Endothelial cell of umbilical vein (primary cell): ENCODE measurements at regions of chr5 and their contacts with region 1.

Region 1: DNA sequence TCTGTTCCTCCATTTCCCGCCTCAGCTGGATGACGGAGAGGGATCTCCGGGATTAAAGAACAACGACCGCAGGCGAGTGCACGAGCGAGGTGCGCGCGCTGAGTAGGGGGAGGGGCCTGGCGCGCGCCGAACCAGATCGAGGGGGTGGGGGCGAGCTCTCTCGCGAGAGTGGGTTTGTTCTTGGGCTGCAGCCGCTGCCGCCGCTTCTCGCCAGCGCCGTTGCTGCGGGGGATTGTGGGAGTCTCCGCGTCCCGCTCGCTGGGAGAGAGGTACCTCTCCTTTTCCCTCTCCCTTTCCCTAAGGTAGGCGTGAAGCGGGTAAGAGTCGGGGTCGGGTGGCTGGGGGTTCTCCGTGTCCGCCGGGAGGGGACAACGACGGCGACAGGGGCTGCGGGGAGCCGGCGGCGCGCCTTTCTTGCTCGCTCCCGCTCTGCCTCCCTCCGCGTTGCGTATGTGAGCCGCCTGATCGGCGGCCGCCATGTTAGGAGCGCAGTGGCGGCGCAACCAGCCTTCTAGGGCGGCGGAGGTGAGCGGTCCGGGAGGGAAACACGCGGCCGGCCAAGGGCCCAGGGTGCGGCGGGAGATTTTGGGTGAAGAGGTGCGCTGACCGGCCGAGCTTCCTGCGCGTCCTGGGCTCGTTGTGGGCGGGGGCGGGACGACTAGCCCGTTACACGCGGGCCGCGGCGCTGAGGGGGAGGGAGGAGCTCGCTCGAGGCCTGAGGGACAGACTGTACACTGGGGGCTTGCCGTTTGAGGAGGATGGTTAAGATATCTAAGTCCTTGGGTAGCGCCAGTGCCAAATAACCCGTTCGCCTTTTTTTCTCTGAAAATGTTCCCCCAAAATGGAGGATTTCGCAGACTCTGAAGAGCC is at the start of gene MATR3:
- DNase-seq: peak; percentile 96
- H3K4me3 ChIP-seq: peak within 1 kb of the TSS; percentile 78 to 93 (median 90)
- H3K27ac ChIP-seq: peak within 1 kb of the TSS; percentile 98
- H3K4me1 ChIP-seq: peaks cover 21% of the 10 kb centered on the region
- H3K27me3 ChIP-seq: no peaks in the 10 kb centered on the region
- CTCF ChIP-seq: peak in 1 of 2 donors; percentile 0
- POLR2A ChIP-seq: peak; percentile 95
- total RNA-seq, gene MATR3: 158 and 164 TPM in 2 replicates

Region 2: GRCh38 chr5:138953387-138954256 is 340.1 kb before region 1 on chr5:
- CTCF ChIA-PET with region 1: no interaction called
- POLR2A ChIA-PET with region 1: no interaction called
- dilution Hi-C with region 1: no loop called
- intact Hi-C with region 1: no loop called
- DNase-seq: peak; percentile 66
- H3K4me3 ChIP-seq: no peak overlapping the region
- H3K27ac ChIP-seq: no peak overlapping the region
- H3K4me1 ChIP-seq: peaks cover 6% of the 10 kb centered on the region
- H3K27me3 ChIP-seq: no peaks in the 10 kb centered on the region
- CTCF ChIP-seq: no peak
- POLR2A ChIP-seq: no peak

Region 3: GRCh38 chr5:138975098-138975847 is 318.5 kb before region 1 on chr5:
- CTCF ChIA-PET with region 1: no interaction called
- POLR2A ChIA-PET with region 1: no interaction called
- dilution Hi-C with region 1: no loop called
- intact Hi-C with region 1: no loop called
- DNase-seq: peak; percentile 66
- H3K4me3 ChIP-seq: no peak overlapping the region
- H3K27ac ChIP-seq: peak overlapping the region; percentile 52
- H3K4me1 ChIP-seq: peaks cover 13% of the 10 kb centered on the region
- H3K27me3 ChIP-seq: no peaks in the 10 kb centered on the region
- CTCF ChIP-seq: no peak
- POLR2A ChIP-seq: no peak

Region 4: DNA sequence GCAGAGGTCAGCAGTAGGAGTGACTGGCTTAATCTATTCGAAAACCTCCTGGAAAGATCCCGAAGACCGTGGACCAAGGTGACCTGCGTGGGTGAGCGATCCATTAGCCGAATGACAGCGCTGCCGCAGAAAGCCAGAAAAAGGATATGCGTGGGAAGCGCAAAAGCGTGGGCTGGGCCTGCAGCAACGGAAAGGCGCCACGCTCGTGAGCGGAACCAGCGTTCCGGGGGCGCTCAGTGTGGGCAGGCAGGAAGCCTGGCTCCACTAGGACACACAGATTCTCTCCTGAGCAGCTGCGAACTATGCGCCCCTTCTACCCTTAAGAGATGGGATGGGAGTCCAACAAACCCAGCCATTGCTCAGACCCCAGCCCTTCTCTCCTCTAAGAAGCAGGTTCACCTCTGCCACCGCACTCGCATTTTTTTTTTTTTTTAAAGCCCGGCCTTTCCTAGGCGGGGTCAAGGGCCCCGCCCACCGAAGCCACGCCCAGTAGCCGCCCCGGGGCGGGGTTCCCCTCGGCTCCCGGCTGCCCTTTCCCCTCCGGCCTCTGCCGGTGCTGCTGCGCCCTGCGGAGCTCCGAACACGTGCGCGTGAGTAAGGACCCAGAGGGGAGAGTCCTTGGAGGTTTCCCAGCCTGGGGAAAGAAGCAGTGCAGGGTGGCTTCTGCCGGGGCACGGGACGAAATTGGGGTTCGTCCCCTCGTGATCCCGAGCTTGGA is 20.0 kb before region 1 on chr5:
- CTCF ChIA-PET with region 1: interaction called, 3 read pairs
- POLR2A ChIA-PET with region 1: interaction called, 4 read pairs
- dilution Hi-C with region 1: no loop called
- intact Hi-C with region 1: loop called (anchors 1 kb)
- DNase-seq: peak; percentile 81
- H3K4me3 ChIP-seq: peak overlapping the region; percentile 53 to 87 (median 55)
- H3K27ac ChIP-seq: peak overlapping the region; percentile 75
- H3K4me1 ChIP-seq: peaks cover 27% of the 10 kb centered on the region
- H3K27me3 ChIP-seq: no peaks in the 10 kb centered on the region
- CTCF ChIP-seq: no peak
- POLR2A ChIP-seq: peak; percentile 95

Region 5: GRCh38 chr5:139341650-139342422 is 48.1 kb after region 1 on chr5 and contains the start of gene PAIP2:
- CTCF ChIA-PET with region 1: interaction called, 12 read pairs
- POLR2A ChIA-PET with region 1: interaction called, 17 read pairs
- dilution Hi-C with region 1: no loop called
- intact Hi-C with region 1: loop called (anchors 1 kb)
- DNase-seq: peak; percentile 98
- H3K4me3 ChIP-seq: peak within 1 kb of the TSS; percentile 80 to 98 (median 91)
- H3K27ac ChIP-seq: peak within 1 kb of the TSS; percentile 95
- H3K4me1 ChIP-seq: peaks cover 7% of the 10 kb centered on the region
- H3K27me3 ChIP-seq: no peaks in the 10 kb centered on the region
- CTCF ChIP-seq: peak; percentile 77 to 86
- POLR2A ChIP-seq: peak; percentile 91
- total RNA-seq, gene PAIP2: 75.2 and 80.4 TPM in 2 replicates

Region 6: GRCh38 chr5:139392678-139393496 is 99.1 kb after region 1 on chr5:
- CTCF ChIA-PET with region 1: interaction called, 5 read pairs
- POLR2A ChIA-PET with region 1: no interaction called
- dilution Hi-C with region 1: no loop called
- intact Hi-C with region 1: loop called (anchors 5 kb)
- DNase-seq: peak; percentile 57
- H3K4me3 ChIP-seq: peak overlapping the region in 2 of 3 experiments; percentile 1 to 15
- H3K27ac ChIP-seq: no peak overlapping the region
- H3K4me1 ChIP-seq: peaks cover 12% of the 10 kb centered on the region
- H3K27me3 ChIP-seq: peaks cover 7 to 14% of the 10 kb centered on the region in 2 experiments
- CTCF ChIP-seq: peak; percentile 75 to 97
- POLR2A ChIP-seq: no peak

Region 7: GRCh38 chr5:139593716-139594319 is 300.1 kb after region 1 on chr5:
- CTCF ChIA-PET with region 1: no interaction called
- POLR2A ChIA-PET with region 1: no interaction called
- dilution Hi-C with region 1: no loop called
- intact Hi-C with region 1: no loop called
- DNase-seq: no peak
- H3K4me3 ChIP-seq: no peak overlapping the region
- H3K27ac ChIP-seq: no peak overlapping the region
- H3K4me1 ChIP-seq: peaks cover 8% of the 10 kb centered on the region
- H3K27me3 ChIP-seq: no peaks in the 10 kb centered on the region
- CTCF ChIP-seq: no peak
- POLR2A ChIP-seq: no peak